Activated CD4-positive, alpha-beta memory T cell treated with anti-CD3 and anti-CD28 coated beads for 36 hours (primary cell): ENCODE measurements at regions of chr9 and their contacts with region 1.

Region 1: DNA sequence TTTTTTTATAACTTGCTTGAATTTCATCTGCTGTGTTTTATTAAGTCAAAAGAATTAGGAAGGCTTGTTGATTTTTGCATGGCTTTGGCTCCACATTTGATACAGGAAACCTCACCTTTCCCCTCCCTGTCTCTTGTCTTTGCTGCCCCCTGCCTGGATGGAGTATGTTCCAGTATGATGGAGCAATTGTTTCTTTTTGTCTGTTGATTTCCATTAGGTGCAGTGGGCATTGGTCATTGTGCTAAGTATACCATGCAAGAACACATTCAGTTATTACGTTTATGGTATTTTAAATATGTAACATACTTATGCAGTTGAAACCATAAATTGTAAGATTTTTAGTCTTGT is 19.6 kb downstream of the TJP2 start:
- DNase-seq: no peak
- H3K4me3 Mint-ChIP-seq: no peak overlapping the region
- H3K27ac Mint-ChIP-seq: no peak overlapping the region
- H3K4me1 Mint-ChIP-seq: peaks cover 8% of the 10 kb centered on the region
- H3K27me3 Mint-ChIP-seq: no peaks in the 10 kb centered on the region

Region 2: GRCh38 chr9:69044240-69045219 is 149.1 kb before region 1 on chr9:
- CTCF ChIA-PET with region 1: interaction called, 11 read pairs
- POLR2A ChIA-PET with region 1: no interaction called
- intact Hi-C with region 1: no loop called
- DNase-seq: peak; percentile 20
- H3K4me3 Mint-ChIP-seq: no peak overlapping the region
- H3K27ac Mint-ChIP-seq: peak overlapping the region; percentile 28
- H3K4me1 Mint-ChIP-seq: peaks cover 13% of the 10 kb centered on the region
- H3K27me3 Mint-ChIP-seq: no peaks in the 10 kb centered on the region

Region 3: DNA sequence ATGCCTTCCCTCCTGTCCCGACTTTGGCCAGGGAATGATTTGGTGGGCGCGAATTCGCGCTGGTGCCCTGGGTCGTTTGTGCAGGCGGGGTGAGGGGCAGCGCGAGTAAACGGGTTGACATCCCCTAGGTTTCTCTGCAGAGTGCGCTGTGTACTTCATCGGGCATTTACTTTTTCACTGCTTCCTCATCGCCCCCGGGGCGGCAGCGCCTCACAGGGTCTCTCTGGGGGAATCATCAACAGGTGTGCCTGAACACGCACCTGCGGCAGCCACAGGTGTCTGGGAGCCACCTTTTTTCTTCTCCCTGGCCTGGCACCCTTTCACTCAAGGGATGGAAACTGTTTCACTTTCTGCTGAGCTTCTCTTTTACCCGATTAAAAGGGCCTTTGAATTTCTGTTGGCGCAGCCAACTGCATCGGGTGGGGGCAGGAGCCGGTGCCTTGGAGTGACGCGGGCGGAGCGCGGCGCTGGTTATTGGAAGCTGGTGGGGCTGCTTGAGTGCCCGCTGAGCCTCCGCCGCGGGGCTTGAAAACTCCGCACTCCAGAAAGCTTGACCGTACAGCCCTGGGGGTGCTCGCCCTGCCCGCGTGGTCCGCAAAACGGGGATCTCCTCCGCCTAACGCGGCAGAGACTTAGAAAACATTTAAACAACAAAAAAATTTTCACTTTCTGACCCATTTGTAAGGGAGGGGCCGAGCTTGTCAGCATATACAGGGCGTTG is 71.7 kb before region 1 on chr9:
- CTCF ChIA-PET with region 1: interaction called, 6 read pairs
- POLR2A ChIA-PET with region 1: no interaction called
- intact Hi-C with region 1: loop called (anchors 1 kb)
- DNase-seq: peak; percentile 58
- H3K4me3 Mint-ChIP-seq: peak overlapping the region; percentile 88
- H3K27ac Mint-ChIP-seq: no peak overlapping the region
- H3K4me1 Mint-ChIP-seq: peaks cover 7% of the 10 kb centered on the region
- H3K27me3 Mint-ChIP-seq: peaks cover 2% of the 10 kb centered on the region

Region 4: GRCh38 chr9:69168709-69169217 is 24.9 kb before region 1 on chr9:
- CTCF ChIA-PET with region 1: interaction called, 11 read pairs
- POLR2A ChIA-PET with region 1: interaction called, 3 read pairs
- intact Hi-C with region 1: no loop called
- DNase-seq: peak; percentile 90
- H3K4me3 Mint-ChIP-seq: peak overlapping the region; percentile 74
- H3K27ac Mint-ChIP-seq: peak overlapping the region; percentile 74
- H3K4me1 Mint-ChIP-seq: peaks cover 23% of the 10 kb centered on the region
- H3K27me3 Mint-ChIP-seq: peaks cover 26% of the 10 kb centered on the region

Region 5: DNA sequence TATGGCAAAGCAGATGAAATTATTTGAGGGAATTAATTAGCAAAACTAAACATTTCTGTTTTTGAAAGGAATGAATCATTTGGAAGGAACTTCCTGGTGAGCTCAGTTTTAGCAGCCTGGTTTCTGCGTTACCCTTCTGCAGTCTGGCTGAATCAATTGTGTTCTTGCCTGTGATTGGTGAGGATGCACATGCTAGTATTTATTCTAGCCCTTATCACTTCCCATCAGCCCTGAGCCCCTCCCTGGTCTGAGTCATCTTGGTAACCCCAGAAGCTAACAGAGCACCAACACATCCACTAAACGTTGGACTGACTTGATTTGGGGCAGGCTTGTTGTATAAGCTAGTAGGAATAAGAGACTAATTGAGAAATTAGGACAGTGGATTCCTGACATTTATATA is 13.0 kb before region 1 on chr9:
- CTCF ChIA-PET with region 1: interaction called, 23 read pairs
- POLR2A ChIA-PET with region 1: no interaction called
- intact Hi-C with region 1: no loop called
- DNase-seq: peak; percentile 79
- H3K4me3 Mint-ChIP-seq: no peak overlapping the region
- H3K27ac Mint-ChIP-seq: peak overlapping the region; percentile 23
- H3K4me1 Mint-ChIP-seq: peaks cover 51% of the 10 kb centered on the region
- H3K27me3 Mint-ChIP-seq: peaks cover 5% of the 10 kb centered on the region

Region 6: DNA sequence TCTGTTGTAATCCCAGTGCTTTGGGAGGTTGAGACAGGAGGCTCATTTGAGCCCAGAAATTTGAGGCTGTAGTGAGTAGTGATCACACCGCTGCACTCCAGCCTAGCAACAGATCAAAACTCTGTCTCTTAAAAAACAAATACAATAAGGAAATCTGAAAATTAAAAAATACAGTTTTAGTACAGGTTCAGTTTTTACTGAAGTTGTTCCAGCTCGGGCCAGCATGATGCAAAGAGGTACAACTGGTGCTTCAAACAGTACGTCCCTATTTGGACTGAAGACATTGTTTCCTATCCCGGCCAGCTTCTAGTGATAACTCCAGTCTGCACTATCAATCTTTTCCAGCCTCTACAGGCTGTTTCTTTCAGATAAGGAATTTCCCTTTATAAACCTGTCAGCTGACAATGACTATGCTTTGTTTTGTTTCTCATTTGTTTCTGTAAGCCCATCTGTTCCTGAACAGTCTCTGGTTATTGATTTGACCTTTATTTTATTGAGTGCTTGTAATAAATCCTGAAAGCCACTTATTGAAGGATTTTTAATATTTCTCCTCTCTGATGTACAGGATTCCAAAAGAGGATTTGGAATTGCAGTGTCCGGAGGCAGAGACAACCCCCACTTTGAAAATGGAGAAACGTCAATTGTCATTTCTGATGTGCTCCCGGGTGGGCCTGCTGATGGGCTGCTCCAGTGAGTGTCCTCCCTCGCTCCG is 22.3 kb after region 1 on chr9:
- CTCF ChIA-PET with region 1: no interaction called
- POLR2A ChIA-PET with region 1: no interaction called
- intact Hi-C with region 1: no loop called
- DNase-seq: no peak
- H3K4me3 Mint-ChIP-seq: no peak overlapping the region
- H3K27ac Mint-ChIP-seq: no peak overlapping the region
- H3K4me1 Mint-ChIP-seq: no peaks in the 10 kb centered on the region
- H3K27me3 Mint-ChIP-seq: no peaks in the 10 kb centered on the region